ENCODE measurements at regions of chr4 and their contacts with region 1.

Region 1: GRCh38 chr4:154618708-154619315 is 6.4 kb upstream of the FGG start:
- DNase-seq: peak; percentile 35 to 76
- ATAC-seq: peak; percentile 86 to 89
- H3K4me3 ChIP-seq: no peak overlapping the region
- H3K27ac ChIP-seq: peak overlapping the region; percentile 51 to 53; a peak in 5 of 6 replicates
- H3K4me1 ChIP-seq: peaks cover 50% of the 10 kb centered on the region
- CTCF ChIP-seq: peak; percentile 81
- EP300 ChIP-seq: no peak
- POLR2A ChIP-seq: no peak
- RAD21 ChIP-seq: peak; percentile 92 to 95

Region 2: GRCh38 chr4:154551872-154552686 is 66.7 kb before region 1 on chr4:
- CTCF ChIA-PET with region 1: interaction called, 214 read pairs
- POLR2A ChIA-PET with region 1: interaction called, 6 read pairs
- DNase-seq: peak; percentile 49 to 79
- ATAC-seq: peak; percentile 63 to 72; a peak in 4 of 6 replicates
- H3K4me3 ChIP-seq: no peak overlapping the region
- H3K27ac ChIP-seq: peak overlapping the region in 1 of 2 experiments; percentile 4; a peak in 2 of 6 replicates
- H3K4me1 ChIP-seq: peaks cover 17% of the 10 kb centered on the region; the same call in 2 of the 3 replicates
- CTCF ChIP-seq: peak; percentile 88
- EP300 ChIP-seq: no peak
- POLR2A ChIP-seq: no peak
- RAD21 ChIP-seq: peak; percentile 85 to 95

Region 3: GRCh38 chr4:154559494-154560418 is 59.1 kb before region 1 on chr4:
- CTCF ChIA-PET with region 1: interaction called, 214 read pairs
- POLR2A ChIA-PET with region 1: no interaction called
- DNase-seq: peak; percentile 30 to 86
- ATAC-seq: peak; percentile 89 to 91
- H3K4me3 ChIP-seq: no peak overlapping the region
- H3K27ac ChIP-seq: peak overlapping the region; percentile 70 to 74
- H3K4me1 ChIP-seq: peaks cover 51% of the 10 kb centered on the region
- CTCF ChIP-seq: peak; percentile 81
- EP300 ChIP-seq: peak in 1 of 2 experiments; percentile 43; a peak in 1 of 5 replicates
- POLR2A ChIP-seq: no peak
- RAD21 ChIP-seq: peak; percentile 95 to 96

Region 4: GRCh38 chr4:154606728-154607723 is 11.8 kb before region 1 on chr4:
- CTCF ChIA-PET with region 1: interaction called, 11 read pairs
- POLR2A ChIA-PET with region 1: interaction called, 6 read pairs
- DNase-seq: no peak
- ATAC-seq: no peak
- H3K4me3 ChIP-seq: no peak overlapping the region
- H3K27ac ChIP-seq: no peak overlapping the region
- H3K4me1 ChIP-seq: peaks cover 4% of the 10 kb centered on the region
- CTCF ChIP-seq: no peak
- EP300 ChIP-seq: no peak
- POLR2A ChIP-seq: no peak
- RAD21 ChIP-seq: no peak